Breast epithelium (tissue), 4 donors: ENCODE measurements at regions of chr2 and their contacts with region 1.

Region 1: DNA sequence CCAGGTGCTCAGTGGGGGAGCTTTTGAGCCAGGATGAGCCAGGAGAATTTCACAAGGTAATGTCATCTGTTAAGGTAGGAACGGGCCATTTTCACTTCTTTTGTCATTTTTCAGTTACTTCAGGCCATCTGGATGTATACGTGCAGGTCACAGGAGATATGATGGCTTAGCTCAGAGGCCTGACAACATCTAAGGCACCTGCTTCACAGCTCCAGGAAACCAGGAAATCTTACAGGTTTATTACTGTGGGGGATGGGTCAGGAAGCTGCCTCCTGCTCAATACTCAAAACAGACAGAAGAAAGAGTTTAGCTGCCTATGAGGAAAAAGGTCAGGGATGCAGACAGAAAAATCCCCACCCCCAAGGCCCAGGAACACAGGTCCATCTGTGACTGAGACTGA is 364.3 kb upstream of the LRP1B start:
- DNase-seq: no peak
- H3K4me3 ChIP-seq: no peak overlapping the region
- H3K27ac ChIP-seq: no peak overlapping the region
- H3K4me1 ChIP-seq: no peaks in the 10 kb centered on the region
- H3K27me3 ChIP-seq: no peaks in the 10 kb centered on the region
- CTCF ChIP-seq: no peak
- POLR2A ChIP-seq: no peak

Region 2: DNA sequence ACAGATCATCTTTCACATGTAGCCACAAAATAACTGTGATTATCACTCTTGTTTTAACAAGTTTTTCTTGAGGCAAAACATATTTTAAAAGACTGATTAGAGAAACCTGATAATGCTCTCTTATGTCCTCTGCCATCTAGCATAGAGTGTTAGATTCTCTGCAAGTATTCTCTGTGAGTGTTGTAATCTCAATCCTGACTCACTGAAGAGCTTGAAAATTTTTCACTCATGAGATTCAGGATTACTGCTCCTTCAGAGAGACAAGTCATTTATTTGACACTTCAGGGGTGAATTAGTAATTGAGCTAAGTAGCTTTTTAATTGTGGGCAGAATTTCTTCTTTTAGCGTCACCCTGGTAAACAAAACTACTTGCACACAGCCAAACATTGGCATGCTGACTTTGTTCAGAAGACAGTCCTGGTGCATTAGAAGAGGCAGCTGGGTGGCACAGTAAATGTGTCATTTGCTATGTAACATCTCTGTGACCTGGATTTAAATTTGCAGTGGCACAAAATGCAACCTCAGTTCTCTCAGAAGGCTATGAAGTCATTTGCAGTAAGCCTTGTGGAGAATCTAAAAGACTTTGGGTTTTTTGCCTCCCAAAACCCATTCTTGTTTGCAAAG is 537.2 kb before region 1 on chr2:
- intact Hi-C with region 1: loop called (anchors 5 kb)
- DNase-seq: no peak
- H3K4me3 ChIP-seq: no peak overlapping the region
- H3K27ac ChIP-seq: no peak overlapping the region
- H3K4me1 ChIP-seq: no peaks in the 10 kb centered on the region
- H3K27me3 ChIP-seq: no peaks in the 10 kb centered on the region
- CTCF ChIP-seq: no peak
- POLR2A ChIP-seq: no peak

Region 3: GRCh38 chr2:142557391-142557790 is 62.2 kb after region 1 on chr2:
- intact Hi-C with region 1: no loop called
- DNase-seq: no peak
- H3K4me3 ChIP-seq: no peak overlapping the region
- H3K27ac ChIP-seq: no peak overlapping the region
- H3K4me1 ChIP-seq: no peaks in the 10 kb centered on the region
- H3K27me3 ChIP-seq: no peaks in the 10 kb centered on the region
- CTCF ChIP-seq: no peak
- POLR2A ChIP-seq: no peak